ENCODE measurements at regions of chr10 and their contacts with region 1.

Region 1: DNA sequence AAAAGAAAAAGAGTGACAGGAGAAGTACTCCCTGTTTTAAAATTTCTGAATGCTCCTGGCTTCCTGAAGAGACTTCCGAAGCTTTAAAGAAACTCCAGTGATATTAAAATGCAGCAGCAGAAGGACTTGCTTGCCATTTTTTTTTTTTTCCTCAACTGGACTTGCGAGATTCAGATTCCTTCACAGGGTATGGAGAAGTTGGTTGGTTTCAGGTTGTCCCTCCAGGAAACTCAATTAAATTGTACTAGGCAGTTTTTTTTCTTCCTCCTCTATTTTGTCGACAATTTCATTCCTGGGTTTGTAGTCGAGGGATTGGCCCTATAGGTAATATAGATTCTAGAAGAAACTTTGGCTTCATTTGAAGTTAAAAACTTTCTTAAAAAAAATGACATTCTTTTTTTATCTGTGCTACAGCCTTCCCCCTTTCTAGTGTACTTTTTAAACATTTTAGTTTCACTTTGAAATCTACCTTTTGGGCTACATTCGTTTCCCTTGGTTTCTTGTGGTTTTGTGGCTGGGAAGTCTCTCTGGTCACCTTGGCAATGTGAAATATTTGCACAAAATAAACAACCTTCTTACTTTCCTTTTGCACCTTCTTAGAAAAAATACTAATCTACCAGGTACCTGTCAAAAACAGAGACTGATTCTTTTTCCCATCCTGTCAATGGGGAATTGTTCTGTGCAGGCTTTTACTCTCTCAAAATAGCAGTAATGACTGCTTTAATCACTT is 350.1 kb downstream of the GATA3 start:
- DNase-seq: peak; percentile 82 to 95 (median 92)
- H3K4me3 ChIP-seq: peak overlapping the region; percentile 12 to 34
- H3K4me3 Mint-ChIP-seq: peak overlapping the region; percentile 56 to 84 (median 78)
- H3K27ac ChIP-seq: peak overlapping the region; percentile 95
- H3K27ac Mint-ChIP-seq: peak overlapping the region; percentile 92 to 100 (median 98)
- H3K4me1 ChIP-seq: peaks cover 87% of the 10 kb centered on the region
- H3K4me1 Mint-ChIP-seq: peaks cover 71 to 91% (median 82%) of the 10 kb centered on the region in 4 donors
- H3K27me3 ChIP-seq: no peaks in the 10 kb centered on the region
- H3K27me3 Mint-ChIP-seq: no peaks in the 10 kb centered on the region

Region 2: GRCh38 chr10:8183241-8183704 is 221.3 kb before region 1 on chr10:
- CTCF ChIA-PET with region 1: no interaction called
- POLR2A ChIA-PET with region 1: interaction called, 9 read pairs
- intact Hi-C with region 1: loop called (anchors 5 kb)
- DNase-seq: peak; percentile 64 to 83 (median 76)
- H3K4me3 ChIP-seq: no peak overlapping the region
- H3K4me3 Mint-ChIP-seq: peak overlapping the region; percentile 57 to 86 (median 64)
- H3K27ac ChIP-seq: peak overlapping the region; percentile 60
- H3K27ac Mint-ChIP-seq: peak overlapping the region; percentile 87 to 98 (median 90)
- H3K4me1 ChIP-seq: peaks cover 34% of the 10 kb centered on the region
- H3K4me1 Mint-ChIP-seq: peaks cover 23 to 44% (median 35%) of the 10 kb centered on the region in 4 donors
- H3K27me3 ChIP-seq: no peaks in the 10 kb centered on the region
- H3K27me3 Mint-ChIP-seq: no peaks in the 10 kb centered on the region

Region 3: GRCh38 chr10:8365935-8366911 is 38.3 kb before region 1 on chr10:
- CTCF ChIA-PET with region 1: no interaction called
- POLR2A ChIA-PET with region 1: interaction called, 11 read pairs
- intact Hi-C with region 1: loop called (anchors 1 kb)
- DNase-seq: peak; percentile 60 to 86 (median 71)
- H3K4me3 ChIP-seq: no peak overlapping the region
- H3K4me3 Mint-ChIP-seq: peak overlapping the region; percentile 17 to 79 (median 55)
- H3K27ac ChIP-seq: peak overlapping the region; percentile 56
- H3K27ac Mint-ChIP-seq: peak overlapping the region; percentile 75 to 96 (median 92)
- H3K4me1 ChIP-seq: peaks cover 43% of the 10 kb centered on the region
- H3K4me1 Mint-ChIP-seq: peaks cover 44 to 67% (median 52%) of the 10 kb centered on the region in 4 donors
- H3K27me3 ChIP-seq: no peaks in the 10 kb centered on the region
- H3K27me3 Mint-ChIP-seq: no peaks in the 10 kb centered on the region

Region 4: GRCh38 chr10:8389630-8390029 is 14.9 kb before region 1 on chr10:
- CTCF ChIA-PET with region 1: interaction called, 3 read pairs
- POLR2A ChIA-PET with region 1: interaction called, 11 read pairs
- intact Hi-C with region 1: no loop called
- DNase-seq: no peak
- H3K4me3 ChIP-seq: no peak overlapping the region
- H3K4me3 Mint-ChIP-seq: no peak overlapping the region
- H3K27ac ChIP-seq: no peak overlapping the region
- H3K27ac Mint-ChIP-seq: no peak overlapping the region
- H3K4me1 ChIP-seq: no peaks in the 10 kb centered on the region
- H3K4me1 Mint-ChIP-seq: peaks cover 0 to 8% (median 6%) of the 10 kb centered on the region in 4 donors
- H3K27me3 ChIP-seq: no peaks in the 10 kb centered on the region
- H3K27me3 Mint-ChIP-seq: peaks cover 0 to 1% of the 10 kb centered on the region in 2 donors

Region 5: DNA sequence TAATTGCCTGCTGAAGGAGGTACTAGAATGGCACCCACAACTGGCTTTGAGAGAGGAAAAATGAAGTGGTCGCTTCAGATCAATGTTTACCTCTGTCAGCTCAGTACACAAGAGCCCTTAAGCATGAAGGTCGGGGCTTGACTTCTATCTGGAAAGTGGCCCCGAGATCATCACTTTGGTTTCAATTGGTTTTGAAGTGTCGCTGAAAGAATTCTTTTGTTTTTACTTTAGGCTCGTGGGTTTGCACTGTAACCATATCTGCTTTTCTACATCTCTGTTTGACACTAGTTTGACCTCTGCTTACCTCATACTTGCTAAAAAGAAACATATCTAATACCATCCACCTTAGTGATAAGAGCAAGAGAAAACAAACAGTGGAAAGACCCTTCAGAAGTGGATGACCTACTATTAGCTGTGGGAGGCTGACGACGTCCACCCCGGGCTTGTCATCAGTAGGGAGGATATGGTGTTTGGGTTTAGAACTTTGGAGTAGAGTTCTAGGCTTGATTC is 11.7 kb after region 1 on chr10:
- CTCF ChIA-PET with region 1: interaction called, 7 read pairs
- POLR2A ChIA-PET with region 1: interaction called, 47 read pairs
- intact Hi-C with region 1: loop called (anchors 1 kb)
- DNase-seq: peak; percentile 73 to 89 (median 84)
- H3K4me3 ChIP-seq: no peak overlapping the region
- H3K4me3 Mint-ChIP-seq: peak overlapping the region in 7 of 8 donors; percentile 7 to 81 (median 51)
- H3K27ac ChIP-seq: peak overlapping the region; percentile 90
- H3K27ac Mint-ChIP-seq: peak overlapping the region; percentile 97 to 100 (median 99)
- H3K4me1 ChIP-seq: peaks cover 31% of the 10 kb centered on the region
- H3K4me1 Mint-ChIP-seq: peaks cover 30 to 58% (median 39%) of the 10 kb centered on the region in 4 donors
- H3K27me3 ChIP-seq: no peaks in the 10 kb centered on the region
- H3K27me3 Mint-ChIP-seq: no peaks in the 10 kb centered on the region